Posterior vena cava (tissue), 2 donors: ENCODE measurements at regions of chr18 and their contacts with region 1.

Region 1: DNA sequence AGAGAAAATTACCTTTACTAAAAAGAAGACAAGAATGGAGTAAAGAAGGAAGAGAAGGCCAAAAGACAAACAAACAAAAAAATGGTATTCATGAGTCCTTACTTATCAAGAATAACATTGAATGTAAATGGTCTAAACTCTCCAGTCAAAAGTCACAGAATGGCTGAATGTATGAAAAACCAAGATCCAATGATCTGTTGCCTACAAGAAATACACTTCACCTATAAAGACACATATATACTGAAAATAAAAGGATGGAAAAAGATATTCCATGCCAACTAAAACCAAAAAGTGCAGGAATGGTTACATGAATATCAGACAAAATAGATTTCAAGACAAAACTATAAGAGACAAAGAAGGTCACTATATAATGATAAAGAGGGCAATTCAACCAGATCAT is 65.0 kb upstream of the ASXL3 start:
- DNase-seq: no peak

Region 2: GRCh38 chr18:33821503-33821902 is 308.5 kb after region 1 on chr18:
- intact Hi-C with region 1: no loop called
- DNase-seq: no peak

Region 3: DNA sequence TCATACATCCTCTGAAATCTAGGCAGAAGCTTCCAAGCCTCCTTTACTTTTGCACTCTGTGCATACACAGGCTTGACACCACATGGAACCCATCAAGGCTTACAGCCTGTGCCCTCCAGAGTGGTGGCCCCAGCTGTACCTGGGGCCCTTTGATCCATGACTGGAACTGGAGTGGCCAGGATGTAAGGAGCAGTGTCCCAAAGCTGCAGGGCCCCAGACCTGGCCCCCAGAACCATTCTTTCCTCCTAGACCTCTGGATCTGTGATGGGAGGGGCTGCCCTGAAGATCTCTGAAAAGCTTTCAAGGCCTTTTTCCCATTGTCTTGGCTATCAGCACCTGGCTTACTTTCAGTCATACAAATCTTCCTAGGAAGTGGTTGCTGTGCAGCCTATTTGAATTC is 774.8 kb after region 1 on chr18:
- intact Hi-C with region 1: loop called in 1 of 2 experiments (anchors 5 kb)
- DNase-seq: no peak